ENCODE measurements at regions of chr9 and their contacts with region 1.

Region 1: DNA sequence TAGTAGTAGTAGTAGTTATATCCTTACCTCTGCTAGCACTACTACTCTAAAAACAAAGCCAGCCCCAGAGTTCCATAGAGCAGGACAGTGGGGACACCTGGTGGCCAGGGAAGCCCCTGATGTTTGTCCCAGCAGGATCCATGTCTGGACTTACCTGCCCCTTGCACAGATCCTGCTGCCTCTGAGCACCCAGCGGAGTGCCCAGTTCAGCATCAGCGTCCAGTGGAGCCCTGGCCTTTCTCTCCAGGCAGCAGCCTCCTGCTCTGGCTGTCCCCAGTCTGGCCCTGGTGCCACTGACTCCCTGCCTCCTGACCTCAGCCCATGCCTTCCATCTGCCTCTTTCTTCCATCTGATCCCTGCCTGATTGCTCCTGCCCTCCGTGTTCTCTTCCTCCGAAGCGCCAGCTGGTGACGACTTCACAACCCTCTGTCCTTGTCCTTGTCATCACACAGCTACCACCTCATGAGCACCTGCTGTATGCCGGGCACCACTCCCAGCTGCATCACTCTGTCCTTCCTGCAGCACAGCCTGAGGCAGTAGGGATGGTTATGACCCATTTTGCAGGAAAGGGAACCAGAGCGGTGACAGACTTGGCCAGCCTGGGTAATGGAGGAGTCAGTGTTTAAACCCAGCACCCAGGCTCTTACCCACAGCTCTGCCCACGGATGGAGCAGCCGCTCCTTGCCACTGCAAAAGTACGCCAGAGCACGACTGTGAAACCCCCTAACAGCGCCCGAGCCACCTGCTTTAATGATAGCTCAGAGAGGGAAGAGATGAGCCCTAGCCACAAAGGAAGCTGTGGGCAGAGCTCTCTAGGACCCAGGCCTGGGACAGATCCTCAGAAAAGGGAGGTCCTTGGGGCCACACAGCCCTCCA is 11.5 kb downstream of the SARDH start:
- DNase-seq: peak; percentile 78
- H3K27ac ChIP-seq: no peak overlapping the region
- CTCF ChIP-seq: peak; percentile 59

Region 2: DNA sequence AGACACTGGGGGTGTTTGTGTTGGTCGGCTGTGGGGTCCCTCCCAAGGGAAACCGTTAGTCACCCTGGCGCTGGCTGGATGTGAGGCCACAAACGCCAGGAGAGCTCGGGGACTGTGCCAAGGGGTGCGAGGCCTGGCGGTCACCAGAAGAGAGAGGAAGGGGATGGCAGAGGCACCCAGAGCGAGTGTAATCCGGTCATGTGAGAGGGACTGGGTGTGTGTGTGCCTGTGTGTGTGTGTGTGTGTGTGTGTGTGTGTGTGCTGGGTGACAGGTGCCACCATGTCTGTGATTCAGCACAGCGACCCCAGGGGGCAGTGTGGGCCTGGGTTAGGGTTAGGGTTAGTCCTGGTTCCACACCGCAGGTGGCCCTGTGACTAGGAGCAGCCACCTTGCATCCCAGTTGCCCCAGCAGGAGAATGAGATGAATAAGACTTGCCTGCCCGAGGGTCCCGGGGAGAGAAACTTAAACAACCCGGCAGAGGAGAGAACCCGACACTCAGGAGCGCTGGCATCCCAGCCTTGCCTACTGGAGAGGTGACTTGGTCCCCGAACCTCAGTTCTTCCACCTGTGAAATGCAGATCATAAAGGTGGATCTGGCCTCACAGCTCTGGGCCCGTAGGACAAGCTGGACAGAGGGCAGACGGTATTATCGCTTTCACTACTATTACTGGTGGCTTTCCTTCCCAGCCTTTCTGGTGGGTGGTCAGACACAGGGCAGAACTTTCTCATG is 193.5 kb before region 1 on chr9:
- CTCF ChIA-PET with region 1: interaction called, 21 read pairs
- POLR2A ChIA-PET with region 1: no interaction called
- DNase-seq: peak; percentile 45
- H3K27ac ChIP-seq: no peak overlapping the region
- CTCF ChIP-seq: peak; percentile 37

Region 3: GRCh38 chr9:133658442-133659431 is 67.9 kb before region 1 on chr9:
- CTCF ChIA-PET with region 1: no interaction called
- POLR2A ChIA-PET with region 1: no interaction called
- DNase-seq: peak; percentile 82
- H3K27ac ChIP-seq: peak overlapping the region; percentile 62
- CTCF ChIP-seq: no peak

Region 4: GRCh38 chr9:133763272-133764183 is 36.9 kb after region 1 on chr9:
- CTCF ChIA-PET with region 1: no interaction called
- POLR2A ChIA-PET with region 1: no interaction called
- DNase-seq: no peak
- H3K27ac ChIP-seq: peak overlapping the region; percentile 24
- CTCF ChIP-seq: no peak